ENCODE measurements at regions of chr21 and their contacts with region 1.

Region 1: GRCh38 chr21:39313571-39314142 is at the start of gene BRWD1:
- DNase-seq: peak; percentile 93
- H3K4me3 ChIP-seq: peak within 1 kb of the TSS; percentile 73 to 97 (median 82)
- H3K27ac ChIP-seq: peak within 1 kb of the TSS; percentile 96 to 99 (median 96)
- H3K4me1 ChIP-seq: peaks cover 0 to 35% (median 26%) of the 10 kb centered on the region in 4 donors
- H3K27me3 ChIP-seq: no peaks in the 10 kb centered on the region
- CTCF ChIP-seq: peak in 2 of 4 experiments; percentile 33 to 43
- EP300 ChIP-seq: peak in 1 of 4 donors; percentile 81
- POLR2A ChIP-seq: peak; percentile 57 to 68
- total RNA-seq, gene BRWD1: 53.5 to 92.5 (median 70.4) TPM

Region 2: GRCh38 chr21:39445321-39446269 is 131.9 kb after region 1 on chr21 and contains the start of gene LCA5L:
- intact Hi-C with region 1: loop called (anchors 2 kb)
- DNase-seq: peak; percentile 95
- H3K4me3 ChIP-seq: peak within 1 kb of the TSS; percentile 48 to 91 (median 76)
- H3K27ac ChIP-seq: peak within 1 kb of the TSS; percentile 91 to 95 (median 92)
- H3K4me1 ChIP-seq: peaks cover 0 to 16% (median 13%) of the 10 kb centered on the region in 4 donors
- H3K27me3 ChIP-seq: no peaks in the 10 kb centered on the region
- CTCF ChIP-seq: no peak
- EP300 ChIP-seq: no peak
- POLR2A ChIP-seq: peak; percentile 40 to 79
- total RNA-seq, gene LCA5L: 0.82 to 5.5 (median 2.1) TPM